BJ (cell line): ENCODE measurements at regions of chr2 and their contacts with region 1.

Region 1: GRCh38 chr2:64330281-64331113 is 123.5 kb upstream of the LGALSL start:
- DNase-seq: peak; percentile 29
- H3K4me3 ChIP-seq: peak overlapping the region; percentile 25
- H3K27me3 ChIP-seq: no peaks in the 10 kb centered on the region; the same call in 1 of the 2 replicates
- CTCF ChIP-seq: peak; percentile 89

Region 2: DNA sequence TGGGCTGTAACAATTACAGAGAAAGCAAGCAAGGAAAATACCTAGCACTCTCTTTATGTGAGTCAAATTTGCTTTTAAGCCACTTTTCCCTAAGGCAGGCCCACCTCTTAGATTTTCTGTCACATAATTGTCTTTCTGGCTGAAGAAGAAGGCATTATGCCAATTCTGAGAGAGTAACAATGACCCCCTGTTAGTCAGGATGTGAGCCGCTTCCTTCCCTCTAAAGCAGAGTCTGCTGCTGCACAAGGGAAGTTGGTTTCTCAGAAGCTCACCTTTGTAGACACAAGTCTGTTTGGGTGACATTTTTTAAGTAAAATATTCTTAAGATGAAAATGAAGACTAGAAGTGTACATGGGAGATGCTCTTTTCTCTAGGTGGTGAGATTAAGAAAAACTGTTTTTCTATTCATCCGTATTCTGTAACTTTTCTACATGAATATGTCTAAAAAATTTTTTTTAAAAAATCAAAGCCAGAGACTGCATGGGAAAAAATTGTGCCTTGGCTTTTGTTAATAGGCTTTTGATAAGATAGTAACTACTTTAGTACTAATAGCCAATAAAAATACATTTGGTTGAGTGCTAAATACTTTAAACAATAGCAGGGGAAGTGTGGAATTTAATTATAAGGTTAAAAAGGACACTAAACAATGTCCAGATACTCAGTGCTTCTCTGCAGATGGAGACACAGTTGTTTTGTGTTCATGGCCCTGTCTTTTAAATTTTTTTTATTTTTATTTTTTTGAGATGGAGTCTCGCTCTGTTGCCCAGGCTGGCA is 277.8 kb before region 1 on chr2:
- CTCF ChIA-PET with region 1: interaction called, 139 read pairs
- POLR2A ChIA-PET with region 1: no interaction called
- DNase-seq: no peak
- H3K4me3 ChIP-seq: no peak overlapping the region
- H3K27me3 ChIP-seq: no peaks in the 10 kb centered on the region; the same call in 1 of the 2 replicates
- CTCF ChIP-seq: no peak

Region 3: GRCh38 chr2:64318476-64318748 is 12.1 kb before region 1 on chr2:
- CTCF ChIA-PET with region 1: interaction called, 34 read pairs
- POLR2A ChIA-PET with region 1: no interaction called
- DNase-seq: no peak
- H3K4me3 ChIP-seq: no peak overlapping the region
- H3K27me3 ChIP-seq: peaks cover 21% of the 10 kb centered on the region
- CTCF ChIP-seq: no peak

Region 4: DNA sequence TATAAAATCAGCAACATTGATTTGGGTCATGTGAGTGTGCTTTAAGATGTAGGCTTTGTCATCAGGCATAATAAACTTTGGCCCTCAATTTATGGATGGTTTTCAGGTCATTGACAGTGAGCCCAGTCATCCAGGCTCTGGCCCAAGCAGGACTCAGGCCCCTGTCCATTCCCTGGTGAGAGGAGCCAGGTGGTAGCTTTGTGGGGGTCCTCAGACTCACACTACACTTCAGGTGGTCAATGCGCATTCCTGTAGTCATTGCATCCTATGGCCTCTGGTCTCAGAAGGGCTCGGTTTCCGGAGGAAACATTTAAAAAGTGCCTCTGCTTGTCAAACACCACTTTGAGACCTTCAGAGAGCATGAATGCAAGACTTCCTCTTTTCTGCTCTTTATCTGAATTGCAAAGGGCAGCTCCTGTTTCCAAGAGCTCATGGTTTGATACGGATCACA is 143.6 kb after region 1 on chr2:
- CTCF ChIA-PET with region 1: interaction called, 10 read pairs
- POLR2A ChIA-PET with region 1: no interaction called
- DNase-seq: no peak
- H3K4me3 ChIP-seq: no peak overlapping the region
- H3K27me3 ChIP-seq: peaks cover 13% of the 10 kb centered on the region
- CTCF ChIP-seq: no peak

Region 5: DNA sequence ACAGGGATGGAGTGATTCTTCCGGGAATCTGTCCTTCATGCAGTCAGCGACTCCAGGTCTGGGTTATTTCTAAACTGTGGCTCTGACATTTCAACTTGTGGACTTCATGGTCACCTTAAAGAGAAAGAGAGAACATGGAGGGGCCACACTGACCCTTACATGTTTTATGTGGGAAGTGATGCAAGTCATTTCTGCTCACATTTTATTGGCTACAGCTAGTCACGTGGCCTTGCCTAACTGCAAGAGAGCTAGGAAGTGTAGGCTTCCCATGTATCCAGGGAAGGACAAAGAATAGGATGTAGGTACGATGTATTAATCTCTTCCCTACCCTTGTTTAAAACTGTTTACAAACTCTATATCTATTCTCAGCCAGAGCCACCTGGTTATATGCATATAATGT is 163.3 kb after region 1 on chr2:
- CTCF ChIA-PET with region 1: interaction called, 158 read pairs
- POLR2A ChIA-PET with region 1: no interaction called
- DNase-seq: no peak
- H3K4me3 ChIP-seq: no peak overlapping the region
- H3K27me3 ChIP-seq: peaks cover 14% of the 10 kb centered on the region
- CTCF ChIP-seq: no peak

Region 6: GRCh38 chr2:64562148-64562784 is 231.8 kb after region 1 on chr2:
- CTCF ChIA-PET with region 1: interaction called, 19 read pairs
- POLR2A ChIA-PET with region 1: no interaction called
- DNase-seq: no peak
- H3K4me3 ChIP-seq: no peak overlapping the region
- H3K27me3 ChIP-seq: no peaks in the 10 kb centered on the region
- CTCF ChIP-seq: peak; percentile 36; the same call in 1 of the 2 replicates

Region 7: GRCh38 chr2:64609227-64609941 is 278.9 kb after region 1 on chr2:
- CTCF ChIA-PET with region 1: no interaction called
- POLR2A ChIA-PET with region 1: no interaction called
- DNase-seq: no peak
- H3K4me3 ChIP-seq: peak overlapping the region; percentile 26; the same call in 1 of the 2 replicates
- H3K27me3 ChIP-seq: peaks cover 18% of the 10 kb centered on the region; the same call in 1 of the 2 replicates
- CTCF ChIP-seq: 0 out of 2 replicates have a peak, but pooled peaks have one; percentile 4